Panc1 (cell line): ENCODE measurements at regions of chr10 and their contacts with region 1.

Region 1: DNA sequence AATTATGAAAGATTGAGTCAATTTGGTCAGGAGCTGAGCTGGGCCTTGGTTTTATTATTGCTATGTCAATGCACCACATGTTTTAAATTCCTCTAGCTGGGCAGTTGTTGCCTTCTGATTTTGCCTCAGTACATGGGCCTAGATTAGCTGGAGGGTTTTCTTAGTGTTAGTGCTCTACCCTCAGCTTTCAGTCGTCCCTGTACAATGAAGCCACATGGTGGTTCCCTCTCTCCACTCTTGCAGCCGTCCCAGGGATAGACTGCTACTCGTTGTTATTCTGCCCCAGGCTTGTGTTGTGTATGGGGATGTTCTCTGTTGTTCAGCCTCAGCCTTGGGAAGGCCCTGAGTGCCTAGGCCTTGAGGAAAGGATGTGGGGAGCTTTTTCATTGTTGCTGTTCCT is 37.0 kb downstream of the NHLRC2 start:
- DNase-seq: no peak
- ATAC-seq: peak; percentile 78
- H3K4me3 ChIP-seq: no peak overlapping the region
- H3K27ac ChIP-seq: no peak overlapping the region; the same call in 1 of the 2 replicates
- H3K4me1 ChIP-seq: 0 out of 2 replicates have a peak, but pooled peaks cover 3% of the 10 kb centered on the region
- H3K27me3 ChIP-seq: no peaks in the 10 kb centered on the region
- CTCF ChIP-seq: peak; percentile 29; the same call in 1 of the 2 replicates

Region 2: GRCh38 chr10:113875212-113875611 is 16.3 kb before region 1 on chr10:
- CTCF ChIA-PET with region 1: interaction called, 11 read pairs
- POLR2A ChIA-PET with region 1: no interaction called
- in situ Hi-C with region 1: no loop called
- intact Hi-C with region 1: no loop called
- DNase-seq: no peak
- ATAC-seq: no peak
- H3K4me3 ChIP-seq: no peak overlapping the region
- H3K27ac ChIP-seq: 0 out of 2 replicates have a peak overlapping the region, but pooled peaks have one; percentile 9
- H3K4me1 ChIP-seq: no peaks in the 10 kb centered on the region
- H3K27me3 ChIP-seq: no peaks in the 10 kb centered on the region
- CTCF ChIP-seq: no peak